Activated CD4-positive, alpha-beta T cell treated with anti-CD3 and anti-CD28 coated beads, Interleukin-2, amount 10 ng/mL, durations not matched to agents 24 days and 14 days (primary cell): ENCODE measurements at regions of chr17 and their contacts with region 1.

Region 1: GRCh38 chr17:50783193-50783660 is 15.9 kb upstream of the ANKRD40CL start:
- DNase-seq: peak; percentile 94
- H3K4me3 Mint-ChIP-seq: no peak overlapping the region
- H3K27ac Mint-ChIP-seq: peak overlapping the region; percentile 32
- H3K4me1 Mint-ChIP-seq: peaks cover 12% of the 10 kb centered on the region
- H3K27me3 Mint-ChIP-seq: peaks cover 23% of the 10 kb centered on the region

Region 2: DNA sequence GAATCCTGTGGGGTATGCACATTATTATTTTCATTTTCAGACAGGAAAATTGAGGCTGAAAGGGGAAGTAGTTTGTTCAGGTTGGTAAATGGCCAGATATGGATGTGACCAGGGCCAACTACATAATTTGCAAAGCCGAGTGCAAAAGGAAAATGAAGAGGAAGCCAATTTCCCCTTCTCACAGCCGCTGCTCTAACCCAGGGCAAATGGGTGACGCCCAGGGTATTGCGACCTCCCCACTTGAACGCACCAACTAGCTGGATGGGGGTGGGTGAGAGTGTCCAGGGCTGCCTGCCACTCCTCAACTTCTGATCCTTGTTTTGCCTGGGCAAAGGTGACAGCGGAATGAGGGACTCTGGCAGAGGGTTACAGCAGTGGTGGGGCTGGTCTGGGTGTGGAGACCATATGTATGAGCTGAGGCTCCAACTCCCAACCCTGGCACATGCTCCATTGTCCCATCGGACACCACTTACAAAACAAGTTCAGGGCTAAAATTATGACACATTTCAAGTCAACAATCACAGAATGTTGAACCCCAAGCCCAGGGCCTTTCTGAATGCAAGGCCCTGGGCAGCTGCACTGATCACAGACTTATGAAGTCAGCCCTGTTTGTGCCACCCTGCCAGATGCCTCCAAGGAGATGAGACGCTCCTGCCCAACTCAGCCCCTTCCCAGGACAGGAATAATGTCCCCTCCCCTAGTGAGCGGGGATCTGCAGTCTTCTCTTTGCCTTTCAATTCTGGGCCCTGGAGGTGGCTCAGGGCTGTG is 17.6 kb before region 1 on chr17:
- intact Hi-C with region 1: no loop called
- DNase-seq: no peak
- H3K4me3 Mint-ChIP-seq: no peak overlapping the region
- H3K27ac Mint-ChIP-seq: no peak overlapping the region
- H3K4me1 Mint-ChIP-seq: no peaks in the 10 kb centered on the region
- H3K27me3 Mint-ChIP-seq: peaks cover 29% of the 10 kb centered on the region

Region 3: DNA sequence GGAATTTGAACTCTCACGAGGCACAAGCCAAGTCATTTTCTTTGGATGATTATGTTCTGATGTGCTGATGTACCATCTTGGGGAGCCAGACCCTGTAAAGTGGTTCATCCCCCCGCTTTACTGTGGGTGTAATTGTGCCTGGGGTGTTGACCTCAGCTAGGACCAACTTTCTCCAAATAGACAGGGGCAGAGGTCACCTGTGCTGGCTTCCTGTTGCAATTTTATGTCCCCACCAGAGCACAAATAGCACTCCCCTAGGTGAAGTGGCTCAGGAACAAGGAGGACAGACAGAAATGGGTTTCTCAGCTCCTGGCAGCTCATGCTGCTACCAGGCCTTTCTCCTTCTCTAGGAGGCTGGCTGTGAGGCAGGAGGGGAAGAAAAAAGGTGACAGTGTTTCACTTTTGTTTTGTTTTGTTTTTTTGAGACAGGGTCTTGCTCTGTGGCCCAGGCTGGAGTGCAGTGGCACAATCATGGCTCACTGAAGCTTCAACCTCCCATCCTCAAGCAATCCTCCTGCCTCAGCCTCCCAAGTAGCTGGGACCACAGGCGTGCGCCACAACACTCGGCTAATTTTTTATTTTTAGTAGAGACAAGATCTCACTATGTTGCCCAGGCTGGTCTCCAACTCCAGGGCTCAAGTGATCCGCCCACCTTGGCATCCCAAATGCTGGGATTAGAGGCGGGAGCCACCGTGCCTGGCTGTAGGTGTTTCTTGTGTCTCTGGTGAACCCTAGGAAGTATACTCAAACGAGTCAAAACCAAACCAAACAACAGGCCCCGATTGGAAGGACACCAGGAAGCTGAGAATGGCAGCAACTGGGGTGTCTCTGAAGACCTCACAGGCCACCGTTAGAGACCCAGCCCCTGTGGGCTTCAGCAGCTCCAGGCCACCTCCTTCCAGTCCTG is 19.6 kb after region 1 on chr17:
- intact Hi-C with region 1: loop called (anchors 2 kb)
- DNase-seq: no peak
- H3K4me3 Mint-ChIP-seq: no peak overlapping the region
- H3K27ac Mint-ChIP-seq: no peak overlapping the region
- H3K4me1 Mint-ChIP-seq: no peaks in the 10 kb centered on the region
- H3K27me3 Mint-ChIP-seq: peaks cover 2% of the 10 kb centered on the region

Region 4: DNA sequence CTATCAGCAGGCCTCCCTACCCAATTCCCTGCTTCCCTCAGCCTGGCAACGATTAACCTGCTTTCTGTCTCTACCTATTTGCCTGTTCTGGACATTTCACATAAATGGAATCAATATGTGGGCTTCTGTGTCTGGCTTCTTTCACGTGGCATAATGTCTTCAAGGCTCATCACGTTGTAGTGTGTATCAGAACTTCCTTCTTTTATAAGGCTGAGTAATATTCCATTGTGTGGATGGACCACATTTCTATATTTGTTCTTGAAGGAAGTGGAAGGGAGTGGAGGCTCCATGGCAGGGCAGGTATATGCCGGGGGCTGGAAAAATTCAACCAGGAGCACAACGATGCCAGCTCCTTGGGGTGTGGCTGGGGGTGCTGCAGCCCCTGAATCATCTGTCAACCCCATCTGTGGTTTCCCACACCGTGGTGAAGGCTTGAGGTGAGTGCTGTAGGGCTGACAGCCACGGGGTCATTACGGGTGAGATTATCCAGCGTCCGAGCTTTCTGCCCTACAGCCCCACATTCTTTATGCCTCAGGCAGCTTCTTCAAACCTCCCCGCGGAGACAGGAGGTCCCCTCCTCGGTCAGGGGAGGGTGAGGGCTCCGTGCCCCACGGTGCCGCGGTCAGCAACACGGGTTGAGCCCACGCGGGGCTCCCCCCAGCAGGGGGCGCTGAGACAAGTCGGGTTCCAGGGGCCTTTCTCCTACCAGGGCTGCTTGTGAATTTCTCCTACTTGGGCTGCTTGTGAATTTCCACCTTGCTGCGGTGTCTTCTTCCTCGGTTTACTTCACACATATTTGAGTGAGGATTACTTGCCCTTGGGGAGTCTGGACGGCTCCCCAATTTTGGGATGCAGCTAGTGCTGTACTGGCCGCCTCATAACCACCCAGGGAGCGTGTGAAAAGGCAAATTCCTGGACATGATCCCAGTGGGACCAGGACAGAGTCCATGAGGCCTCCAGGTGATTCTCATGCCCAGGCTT is 33.8 kb after region 1 on chr17:
- intact Hi-C with region 1: loop called (anchors 5 kb)
- DNase-seq: peak; percentile 88
- H3K4me3 Mint-ChIP-seq: no peak overlapping the region
- H3K27ac Mint-ChIP-seq: no peak overlapping the region
- H3K4me1 Mint-ChIP-seq: peaks cover 10% of the 10 kb centered on the region
- H3K27me3 Mint-ChIP-seq: peaks cover 30% of the 10 kb centered on the region

Region 5: DNA sequence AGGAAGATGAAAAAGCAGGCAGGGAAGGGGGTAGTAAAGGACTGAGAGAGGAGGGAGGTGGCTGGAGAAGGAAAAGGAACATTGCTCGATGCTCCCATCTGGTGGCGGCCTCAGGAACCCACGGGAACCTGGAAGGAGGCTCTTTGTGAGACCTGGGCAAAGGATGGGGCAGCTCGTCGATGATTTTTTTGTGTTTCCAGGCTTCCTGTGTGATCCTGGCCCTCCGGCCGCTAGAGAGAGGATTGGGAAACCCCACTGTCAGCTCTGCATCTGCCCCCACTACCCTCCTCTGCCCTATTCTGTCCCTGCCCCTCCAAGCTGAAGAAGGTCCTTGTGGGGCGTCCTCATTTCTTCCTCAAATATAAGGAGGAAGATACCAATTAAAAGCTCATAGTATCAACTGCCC is 58.7 kb after region 1 on chr17:
- intact Hi-C with region 1: loop called (anchors 1 kb)
- DNase-seq: peak; percentile 87
- H3K4me3 Mint-ChIP-seq: no peak overlapping the region
- H3K27ac Mint-ChIP-seq: no peak overlapping the region
- H3K4me1 Mint-ChIP-seq: peaks cover 3% of the 10 kb centered on the region
- H3K27me3 Mint-ChIP-seq: no peaks in the 10 kb centered on the region

Region 6: DNA sequence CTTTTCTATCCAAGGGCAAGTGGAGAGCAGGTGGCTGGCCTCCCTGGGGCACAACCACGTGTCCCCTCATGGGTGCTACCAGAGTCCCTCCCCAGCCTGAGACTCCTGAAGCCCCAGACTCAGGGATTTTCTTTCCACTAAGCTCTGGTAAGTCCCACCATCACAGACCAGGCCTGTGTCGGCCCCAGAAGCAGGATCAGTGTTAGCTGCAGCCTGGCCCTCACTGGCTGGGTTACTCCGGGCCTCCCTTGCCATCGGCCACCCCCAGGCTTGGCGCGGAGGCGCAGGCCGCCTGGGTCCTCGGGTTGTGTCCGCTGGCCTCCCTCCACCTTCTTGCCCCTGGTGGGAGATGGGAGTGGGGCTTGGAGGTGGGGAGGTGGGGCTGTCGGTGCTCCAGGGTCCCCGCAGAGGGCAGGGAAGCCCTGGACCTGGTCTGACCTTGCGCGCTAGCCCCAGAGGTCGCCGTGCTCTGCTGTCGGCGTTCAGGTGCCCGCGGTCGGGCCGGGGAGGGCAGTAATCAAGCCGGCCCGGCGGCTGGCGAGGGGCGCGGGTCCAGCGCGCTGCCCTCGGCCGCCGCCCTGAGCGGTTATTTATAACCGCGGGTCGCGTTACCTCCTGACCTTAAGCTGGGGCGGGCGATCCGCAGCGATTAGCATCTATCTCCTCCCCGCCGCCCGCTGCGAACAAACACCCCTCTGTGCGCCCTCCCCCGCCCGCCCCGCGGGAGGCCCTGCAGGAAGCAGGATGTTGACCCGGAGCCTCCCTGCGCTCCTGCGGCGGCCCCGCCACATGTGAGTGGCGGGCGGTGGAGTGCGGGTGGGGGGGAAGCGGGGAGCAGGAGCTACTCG is 161.1 kb after region 1 on chr17:
- intact Hi-C with region 1: no loop called
- DNase-seq: peak; percentile 94
- H3K4me3 Mint-ChIP-seq: peak overlapping the region; percentile 80
- H3K27ac Mint-ChIP-seq: peak overlapping the region; percentile 86
- H3K4me1 Mint-ChIP-seq: peaks cover 24% of the 10 kb centered on the region
- H3K27me3 Mint-ChIP-seq: no peaks in the 10 kb centered on the region

Region 7: GRCh38 chr17:50956750-50957523 is 173.7 kb after region 1 on chr17:
- intact Hi-C with region 1: loop called (anchors 1 kb)
- DNase-seq: peak; percentile 90
- H3K4me3 Mint-ChIP-seq: no peak overlapping the region
- H3K27ac Mint-ChIP-seq: no peak overlapping the region
- H3K4me1 Mint-ChIP-seq: peaks cover 6% of the 10 kb centered on the region
- H3K27me3 Mint-ChIP-seq: no peaks in the 10 kb centered on the region

Region 8: GRCh38 chr17:51147650-51148049 is 364.4 kb after region 1 on chr17:
- intact Hi-C with region 1: loop called (anchors 10 kb)
- DNase-seq: no peak
- H3K4me3 Mint-ChIP-seq: peak overlapping the region; percentile 8
- H3K27ac Mint-ChIP-seq: peak overlapping the region; percentile 83
- H3K4me1 Mint-ChIP-seq: peaks cover 16% of the 10 kb centered on the region
- H3K27me3 Mint-ChIP-seq: no peaks in the 10 kb centered on the region